ENCODE measurements at regions of chr12 and their contacts with region 1.

Region 1: DNA sequence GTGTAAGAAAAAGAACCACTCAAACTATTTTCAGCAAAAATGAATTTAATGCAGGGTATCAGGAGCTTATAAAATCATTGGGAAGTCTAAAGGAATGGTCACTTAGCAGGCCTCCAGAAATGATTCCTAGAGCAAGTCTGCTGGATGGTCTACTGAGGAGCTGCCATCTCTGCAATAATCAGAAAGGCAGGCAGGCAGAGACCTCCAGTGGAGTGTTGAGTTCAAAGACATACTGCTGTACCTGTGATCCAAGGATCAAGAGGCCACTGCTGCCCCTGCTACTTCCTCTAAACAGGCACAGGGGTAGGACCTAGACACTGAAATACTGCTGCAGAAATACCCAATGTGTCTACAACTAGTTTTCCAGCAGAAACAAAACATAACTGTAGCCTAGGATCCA is 14.5 kb upstream of the KICS2 start:
- DNase-seq: no peak
- ATAC-seq: peak; percentile 50
- H3K4me3 ChIP-seq: no peak overlapping the region
- H3K27ac ChIP-seq: no peak overlapping the region
- H3K4me1 ChIP-seq: no peaks in the 10 kb centered on the region
- H3K27me3 ChIP-seq: no peaks in the 10 kb centered on the region
- CTCF ChIP-seq: peak in 1 of 3 experiments; percentile 33; a peak in 2 of 6 replicates
- EP300 ChIP-seq: no peak
- POLR2A ChIP-seq: no peak
- RAD21 ChIP-seq: peak; percentile 66

Region 2: DNA sequence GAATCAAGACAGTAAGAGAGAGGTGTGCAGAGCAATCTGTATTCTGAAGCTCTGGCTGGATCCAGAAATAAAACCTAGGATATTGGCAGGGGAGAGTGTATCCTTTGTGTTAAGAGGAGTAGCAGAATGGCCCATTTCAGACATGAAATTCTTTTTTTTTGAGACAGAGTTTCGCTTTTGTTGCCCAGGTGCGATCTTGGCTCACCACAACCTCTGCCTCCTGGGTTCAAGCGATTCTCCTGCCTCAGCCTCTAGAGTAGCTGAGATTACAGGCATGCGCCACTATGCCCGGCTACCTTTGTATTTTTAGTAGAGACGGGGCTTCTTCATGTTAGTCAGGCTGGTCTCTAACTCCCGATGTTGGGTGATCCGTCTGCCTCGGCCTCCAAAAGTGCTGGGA is 398.1 kb before region 1 on chr12:
- CTCF ChIA-PET with region 1: interaction called, 12 read pairs
- POLR2A ChIA-PET with region 1: no interaction called
- RAD21 ChIA-PET with region 1: interaction called, 6 read pairs
- SMC1A ChIA-PET with region 1: interaction called, 4 read pairs
- in situ Hi-C with region 1: no loop called
- intact Hi-C with region 1: no loop called
- DNase-seq: no peak
- ATAC-seq: no peak
- H3K4me3 ChIP-seq: no peak overlapping the region
- H3K27ac ChIP-seq: no peak overlapping the region
- H3K4me1 ChIP-seq: 0 out of 2 replicates have a peak, but pooled peaks cover 3% of the 10 kb centered on the region
- H3K27me3 ChIP-seq: no peaks in the 10 kb centered on the region; a peak in 1 of 4 replicates
- CTCF ChIP-seq: no peak
- EP300 ChIP-seq: no peak
- POLR2A ChIP-seq: no peak
- RAD21 ChIP-seq: no peak

Region 3: GRCh38 chr12:64192644-64193444 is 43.7 kb before region 1 on chr12:
- CTCF ChIA-PET with region 1: no interaction called
- POLR2A ChIA-PET with region 1: no interaction called
- RAD21 ChIA-PET with region 1: no interaction called
- SMC1A ChIA-PET with region 1: no interaction called
- in situ Hi-C with region 1: no loop called
- intact Hi-C with region 1: no loop called
- DNase-seq: no peak
- ATAC-seq: peak; percentile 98
- H3K4me3 ChIP-seq: no peak overlapping the region
- H3K27ac ChIP-seq: peak overlapping the region; percentile 46; the same call in 1 of the 2 replicates
- H3K4me1 ChIP-seq: peaks cover 10% of the 10 kb centered on the region; the same call in 1 of the 2 replicates
- H3K27me3 ChIP-seq: no peaks in the 10 kb centered on the region
- CTCF ChIP-seq: no peak
- EP300 ChIP-seq: peak in 1 of 2 experiments; percentile 46; a peak in 1 of 4 replicates
- POLR2A ChIP-seq: no peak
- RAD21 ChIP-seq: no peak

Region 4: DNA sequence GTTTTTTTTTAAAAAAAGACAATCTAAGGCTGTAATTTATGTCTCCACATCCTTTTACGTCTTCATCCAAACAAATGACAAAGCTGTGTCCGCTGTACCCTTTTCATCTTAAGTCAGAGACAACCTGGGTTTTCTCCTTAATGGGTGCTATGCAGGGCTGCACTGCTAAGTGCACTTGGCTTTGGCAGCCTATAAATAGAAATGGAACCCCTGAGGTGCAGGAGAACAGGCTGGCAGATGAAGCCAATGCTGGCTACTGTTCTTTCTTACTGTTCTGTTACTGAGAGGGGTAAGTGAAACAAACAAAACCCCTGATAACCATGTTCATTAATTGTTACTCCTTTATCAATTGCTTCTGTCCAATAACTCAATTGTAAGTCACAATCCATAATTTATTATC is 32.6 kb after region 1 on chr12:
- CTCF ChIA-PET with region 1: no interaction called
- POLR2A ChIA-PET with region 1: no interaction called
- RAD21 ChIA-PET with region 1: no interaction called
- SMC1A ChIA-PET with region 1: no interaction called
- in situ Hi-C with region 1: no loop called
- intact Hi-C with region 1: no loop called
- DNase-seq: no peak
- ATAC-seq: no peak
- H3K4me3 ChIP-seq: no peak overlapping the region
- H3K27ac ChIP-seq: no peak overlapping the region
- H3K4me1 ChIP-seq: no peaks in the 10 kb centered on the region
- H3K27me3 ChIP-seq: no peaks in the 10 kb centered on the region; a peak in 1 of 4 replicates
- CTCF ChIP-seq: no peak
- EP300 ChIP-seq: no peak
- POLR2A ChIP-seq: no peak
- RAD21 ChIP-seq: no peak